AG04450 (cell line): ENCODE measurements at regions of chr2 and their contacts with region 1.

Region 1: DNA sequence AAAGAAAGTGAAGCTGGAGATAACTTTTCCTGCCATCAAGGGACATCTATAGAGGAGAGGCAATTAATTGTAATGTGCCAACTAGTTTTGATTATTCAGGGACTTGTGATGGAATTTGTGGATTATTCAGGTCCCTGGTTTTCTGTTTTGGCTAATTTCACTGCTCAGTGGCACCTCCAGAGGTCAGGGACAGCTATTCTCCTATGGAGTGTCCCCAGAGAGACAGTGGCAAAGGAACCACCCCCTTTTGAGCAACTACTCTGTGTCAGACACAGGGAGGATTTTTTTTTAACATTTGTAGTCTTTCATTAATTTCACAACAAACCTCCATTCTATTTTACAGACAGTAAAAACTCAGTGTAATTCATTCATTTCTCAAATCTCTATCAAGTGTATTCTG is 206.0 kb upstream of the SPRED2 start:
- DNase-seq: no peak
- H3K4me3 ChIP-seq: no peak overlapping the region
- H3K27ac ChIP-seq: no peak overlapping the region
- H3K27me3 ChIP-seq: peaks cover 4% of the 10 kb centered on the region
- CTCF ChIP-seq: 0 out of 2 replicates have a peak, but pooled peaks have one; percentile 12

Region 2: DNA sequence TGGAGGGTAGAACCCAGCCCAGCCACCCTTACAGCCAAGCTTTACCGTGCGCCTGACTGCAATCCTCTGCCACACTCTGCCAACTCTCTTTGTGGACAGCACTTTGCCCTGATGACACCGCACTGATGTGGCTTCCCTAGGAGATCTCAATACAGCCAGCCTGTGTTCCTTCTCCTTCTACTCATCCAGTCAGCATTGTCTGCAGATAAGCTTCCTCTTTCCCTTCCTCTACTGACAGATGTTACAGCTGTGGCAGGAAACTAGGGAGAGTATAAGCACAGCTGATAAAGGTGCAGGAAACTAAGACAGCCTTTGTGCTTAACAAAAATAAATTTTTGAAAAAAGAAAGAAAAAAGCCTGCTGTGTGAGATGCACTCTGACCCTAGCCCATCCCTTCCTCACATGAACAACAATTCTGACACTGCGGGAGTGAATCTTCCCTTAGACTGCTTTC is 557.2 kb before region 1 on chr2:
- CTCF ChIA-PET with region 1: no interaction called
- POLR2A ChIA-PET with region 1: no interaction called
- DNase-seq: no peak
- H3K4me3 ChIP-seq: no peak overlapping the region
- H3K27ac ChIP-seq: peak overlapping the region; percentile 21
- H3K27me3 ChIP-seq: no peaks in the 10 kb centered on the region
- CTCF ChIP-seq: no peak

Region 3: DNA sequence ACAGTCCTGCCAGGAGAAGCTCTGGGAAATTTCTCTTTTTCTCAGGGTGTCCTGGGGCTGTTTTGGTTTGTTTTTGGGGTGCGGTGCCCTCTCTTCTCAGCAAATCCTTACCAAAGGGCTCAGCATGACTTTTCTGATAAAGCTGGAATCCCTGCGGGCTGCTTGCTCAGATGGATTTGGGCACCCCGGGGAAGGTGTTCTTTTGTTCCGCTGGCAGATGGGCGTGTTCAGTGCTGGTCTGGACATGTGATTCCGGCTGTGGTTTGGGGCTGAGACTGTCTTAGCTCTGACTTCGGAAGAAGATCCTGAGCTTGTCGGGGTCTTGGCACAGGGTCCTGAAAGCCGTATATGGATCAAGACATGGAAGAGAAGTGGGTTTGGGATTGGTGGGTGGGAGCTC is 71.8 kb before region 1 on chr2:
- CTCF ChIA-PET with region 1: no interaction called
- POLR2A ChIA-PET with region 1: no interaction called
- DNase-seq: no peak
- H3K4me3 ChIP-seq: no peak overlapping the region
- H3K27ac ChIP-seq: no peak overlapping the region
- H3K27me3 ChIP-seq: no peaks in the 10 kb centered on the region
- CTCF ChIP-seq: no peak

Region 4: DNA sequence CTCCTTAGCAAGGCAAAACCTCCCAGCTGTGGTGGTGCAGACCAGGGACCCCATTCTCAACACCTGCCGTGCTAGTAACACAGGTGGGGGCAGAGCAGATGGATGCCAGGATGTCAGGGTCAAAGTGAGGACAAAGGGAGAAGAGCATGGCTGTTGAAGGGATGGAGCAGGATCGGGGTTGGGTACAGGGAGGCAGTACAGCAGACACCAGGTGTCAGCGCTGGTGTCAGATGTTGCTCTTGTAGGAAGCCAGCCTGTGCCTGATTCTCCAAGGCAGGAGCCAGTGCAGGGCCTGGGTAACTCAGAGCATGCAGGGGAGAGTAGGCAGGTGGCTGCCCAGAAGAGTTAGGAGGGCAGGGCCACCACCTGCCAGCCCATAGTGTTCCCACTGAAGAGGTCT is 16.1 kb after region 1 on chr2:
- CTCF ChIA-PET with region 1: interaction called, 23 read pairs
- POLR2A ChIA-PET with region 1: no interaction called
- DNase-seq: no peak
- H3K4me3 ChIP-seq: no peak overlapping the region
- H3K27ac ChIP-seq: no peak overlapping the region
- H3K27me3 ChIP-seq: no peaks in the 10 kb centered on the region
- CTCF ChIP-seq: no peak

Region 5: GRCh38 chr2:65710779-65711295 is 72.4 kb after region 1 on chr2:
- CTCF ChIA-PET with region 1: interaction called, 13 read pairs
- POLR2A ChIA-PET with region 1: no interaction called
- DNase-seq: no peak
- H3K4me3 ChIP-seq: no peak overlapping the region
- H3K27ac ChIP-seq: no peak overlapping the region
- H3K27me3 ChIP-seq: peaks cover 14% of the 10 kb centered on the region
- CTCF ChIP-seq: peak; percentile 52

Region 6: DNA sequence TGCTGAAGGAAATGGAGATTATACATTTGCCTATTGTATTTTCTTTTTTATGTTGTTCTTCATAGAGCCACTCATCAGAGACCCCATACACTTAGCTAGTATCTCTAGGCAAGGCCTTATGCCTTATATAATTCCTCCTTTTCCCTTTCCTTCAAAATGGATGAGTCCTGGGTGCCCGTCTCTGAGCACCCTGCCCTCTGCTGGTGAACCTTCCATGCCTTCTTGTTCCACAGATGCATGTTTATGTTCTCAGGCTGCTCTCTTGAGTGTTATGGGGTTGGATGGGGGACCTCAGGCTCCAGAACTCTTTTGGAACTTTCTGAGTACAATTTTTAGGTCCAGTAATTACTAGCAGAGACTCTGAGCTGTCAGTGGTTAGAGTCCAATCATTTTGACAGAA is 162.6 kb after region 1 on chr2:
- CTCF ChIA-PET with region 1: interaction called, 42 read pairs
- POLR2A ChIA-PET with region 1: no interaction called
- DNase-seq: peak; percentile 3
- H3K4me3 ChIP-seq: no peak overlapping the region
- H3K27ac ChIP-seq: no peak overlapping the region
- H3K27me3 ChIP-seq: peaks cover 6% of the 10 kb centered on the region
- CTCF ChIP-seq: peak; percentile 57

Region 7: DNA sequence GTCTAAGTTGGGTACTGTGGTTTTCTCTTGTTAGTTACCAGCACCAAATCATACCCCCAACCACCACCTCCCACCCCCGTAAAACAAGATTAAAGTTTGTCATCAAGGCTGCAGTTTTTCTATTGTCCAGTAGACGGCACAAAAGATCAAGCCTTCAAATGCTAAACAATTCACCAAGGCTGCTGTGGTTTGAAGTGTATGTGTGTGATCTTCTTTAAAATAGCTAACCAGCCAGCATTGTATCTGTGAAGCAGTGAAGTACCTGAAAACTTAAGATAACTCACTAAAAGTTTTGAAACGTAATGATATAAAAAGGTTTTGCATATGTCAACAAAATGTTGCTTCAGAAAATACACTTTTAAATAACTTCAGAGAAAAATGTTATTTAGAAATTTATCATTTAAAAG is 790.6 kb after region 1 on chr2:
- CTCF ChIA-PET with region 1: interaction called, 10 read pairs
- POLR2A ChIA-PET with region 1: no interaction called
- DNase-seq: no peak
- H3K4me3 ChIP-seq: no peak overlapping the region
- H3K27ac ChIP-seq: no peak overlapping the region
- H3K27me3 ChIP-seq: no peaks in the 10 kb centered on the region
- CTCF ChIP-seq: peak; percentile 97